ENCODE measurements at regions of chr19 and their contacts with region 1.

Region 1: GRCh38 chr19:42129399-42130253 is 2.6 kb downstream of the POU2F2 start:
- DNase-seq: no peak
- H3K4me3 ChIP-seq: peak overlapping the region in 1 of 3 donors; percentile 9
- H3K27ac ChIP-seq: no peak overlapping the region
- H3K4me1 ChIP-seq: no peaks in the 10 kb centered on the region
- H3K27me3 ChIP-seq: peaks cover 0 to 12% of the 10 kb centered on the region in 2 donors
- CTCF ChIP-seq: no peak
- POLR2A ChIP-seq: no peak

Region 2: GRCh38 chr19:42143341-42144234 is 14.0 kb after region 1 on chr19:
- intact Hi-C with region 1: no loop called
- DNase-seq: no peak
- H3K4me3 ChIP-seq: no peak overlapping the region
- H3K27ac ChIP-seq: no peak overlapping the region
- H3K4me1 ChIP-seq: no peaks in the 10 kb centered on the region
- H3K27me3 ChIP-seq: no peaks in the 10 kb centered on the region
- CTCF ChIP-seq: no peak
- POLR2A ChIP-seq: no peak

Region 3: DNA sequence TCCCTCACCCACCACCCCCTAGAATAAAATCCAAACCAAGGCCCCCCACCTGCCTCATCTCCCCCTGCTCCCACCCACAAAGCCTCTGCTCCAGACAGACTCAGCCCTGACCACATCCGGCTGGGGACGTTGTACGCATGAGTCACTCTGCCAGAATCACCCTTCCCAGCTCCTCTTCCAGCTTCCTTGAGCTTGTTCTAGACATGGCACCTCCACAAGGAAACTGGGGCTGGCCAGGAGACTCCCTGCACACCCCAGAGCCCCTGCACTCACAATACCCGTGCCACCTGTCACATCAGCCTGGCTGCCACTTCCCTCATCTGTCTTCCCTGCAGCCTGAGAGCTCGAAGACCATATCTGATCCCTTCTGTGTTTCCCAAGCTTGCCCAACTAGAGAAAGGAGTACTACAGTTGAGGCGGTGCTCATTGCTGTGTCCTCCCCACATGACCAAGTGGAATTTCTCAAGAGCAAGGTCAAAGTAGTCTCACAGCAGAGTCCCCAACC is 78.2 kb after region 1 on chr19:
- intact Hi-C with region 1: loop called (anchors 2 kb)
- DNase-seq: peak in 1 of 2 donors; percentile 46
- H3K4me3 ChIP-seq: no peak overlapping the region
- H3K27ac ChIP-seq: peak overlapping the region; percentile 44 to 59
- H3K4me1 ChIP-seq: no peaks in the 10 kb centered on the region
- H3K27me3 ChIP-seq: no peaks in the 10 kb centered on the region
- CTCF ChIP-seq: no peak
- POLR2A ChIP-seq: no peak

Region 4: DNA sequence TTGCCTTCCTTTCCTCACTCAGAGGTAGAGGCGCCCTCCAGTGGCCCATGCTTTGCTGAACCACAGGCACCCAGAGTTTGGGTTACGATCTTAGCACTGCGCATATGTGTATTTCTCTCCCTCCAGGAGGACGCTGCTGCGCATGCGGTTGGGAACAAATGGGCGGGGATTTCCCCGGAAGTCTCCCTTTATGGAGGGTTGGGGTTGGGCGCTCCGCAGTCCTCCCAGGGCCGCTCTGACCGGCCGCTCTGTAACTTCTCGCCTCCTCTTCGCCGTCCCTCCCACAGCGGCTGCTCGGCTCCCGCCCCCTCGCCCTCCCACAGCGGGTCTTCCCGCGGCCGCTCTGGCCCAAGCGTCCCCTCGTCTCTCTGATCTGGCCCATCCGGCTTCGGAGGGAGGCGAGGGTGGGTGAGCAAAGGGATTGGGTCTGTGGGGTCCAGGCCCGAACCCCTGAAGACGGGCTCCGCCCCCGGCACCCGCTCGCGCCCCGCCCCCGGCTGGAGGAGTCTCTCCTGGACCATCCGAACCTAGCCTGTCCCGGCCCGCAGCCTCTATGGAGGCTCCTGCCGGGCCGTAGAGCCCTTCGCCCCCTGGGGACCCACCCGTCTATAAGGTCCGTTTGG is 195.8 kb after region 1 on chr19 and contains the start of gene MEGF8:
- intact Hi-C with region 1: loop called (anchors 5 kb)
- DNase-seq: peak; percentile 96 to 98
- H3K4me3 ChIP-seq: peak within 1 kb of the TSS; percentile 75 to 87 (median 80)
- H3K27ac ChIP-seq: peak within 1 kb of the TSS; percentile 61 to 77
- H3K4me1 ChIP-seq: peaks cover 3 to 8% of the 10 kb centered on the region in 2 donors
- H3K27me3 ChIP-seq: peaks cover 5 to 15% of the 10 kb centered on the region in 2 donors
- CTCF ChIP-seq: peak in 1 of 3 donors; percentile 89
- POLR2A ChIP-seq: no peak
- total RNA-seq, gene MEGF8: 9.7 to 15.5 (median 10.8) TPM

Region 5: DNA sequence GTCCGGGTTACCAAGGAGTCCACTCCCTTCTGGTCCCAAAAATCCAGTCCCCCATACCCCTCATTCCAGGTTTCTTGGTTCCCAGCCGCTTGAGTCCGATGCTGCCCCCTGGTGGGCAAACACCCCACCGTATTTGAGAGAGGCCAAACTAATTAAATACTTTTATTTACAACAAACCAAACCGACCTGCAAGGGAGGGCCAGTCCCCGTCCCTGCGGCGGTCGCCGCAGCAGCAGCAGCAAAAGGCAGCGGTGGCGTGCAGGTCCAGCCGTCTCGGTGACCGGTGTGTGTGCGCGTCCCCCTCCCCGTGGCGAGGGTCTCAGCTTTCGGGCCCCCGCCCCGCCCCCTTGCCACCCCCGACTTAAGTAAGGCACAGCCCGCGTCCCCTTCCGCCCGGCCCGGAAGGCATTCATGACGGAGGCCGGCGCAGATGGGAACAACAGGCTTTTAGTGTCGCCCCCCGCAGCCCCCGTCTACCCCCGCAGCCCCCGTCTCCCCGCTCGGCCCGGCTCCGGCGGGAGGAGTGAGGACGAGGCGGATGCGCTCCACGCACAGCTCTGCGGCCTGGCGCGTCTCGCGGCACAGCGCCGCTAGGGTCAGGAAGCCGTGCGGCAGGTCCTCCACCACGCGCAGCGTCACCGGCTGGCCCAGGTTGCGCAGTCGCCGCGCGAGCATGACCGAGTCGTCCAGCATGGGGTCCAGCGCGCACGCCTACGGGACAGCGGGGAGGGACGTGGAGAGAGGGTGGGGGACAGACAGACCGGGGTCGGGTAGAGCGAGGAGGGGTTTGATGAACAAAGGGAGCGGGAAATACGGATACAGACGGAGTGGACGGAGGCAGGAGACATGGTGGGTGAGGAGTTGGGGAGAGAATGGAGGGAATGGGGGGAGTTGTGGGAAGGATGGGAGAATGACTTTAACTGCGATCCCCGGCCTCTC is 272.0 kb after region 1 on chr19:
- intact Hi-C with region 1: no loop called
- DNase-seq: peak; percentile 85 to 87
- H3K4me3 ChIP-seq: peak overlapping the region; percentile 55 to 78 (median 70)
- H3K27ac ChIP-seq: peak overlapping the region; percentile 82 to 84
- H3K4me1 ChIP-seq: peaks cover 4 to 5% of the 10 kb centered on the region in 2 donors
- H3K27me3 ChIP-seq: no peaks in the 10 kb centered on the region
- CTCF ChIP-seq: peak; percentile 76 to 78 (median 78)
- POLR2A ChIP-seq: no peak

Region 6: DNA sequence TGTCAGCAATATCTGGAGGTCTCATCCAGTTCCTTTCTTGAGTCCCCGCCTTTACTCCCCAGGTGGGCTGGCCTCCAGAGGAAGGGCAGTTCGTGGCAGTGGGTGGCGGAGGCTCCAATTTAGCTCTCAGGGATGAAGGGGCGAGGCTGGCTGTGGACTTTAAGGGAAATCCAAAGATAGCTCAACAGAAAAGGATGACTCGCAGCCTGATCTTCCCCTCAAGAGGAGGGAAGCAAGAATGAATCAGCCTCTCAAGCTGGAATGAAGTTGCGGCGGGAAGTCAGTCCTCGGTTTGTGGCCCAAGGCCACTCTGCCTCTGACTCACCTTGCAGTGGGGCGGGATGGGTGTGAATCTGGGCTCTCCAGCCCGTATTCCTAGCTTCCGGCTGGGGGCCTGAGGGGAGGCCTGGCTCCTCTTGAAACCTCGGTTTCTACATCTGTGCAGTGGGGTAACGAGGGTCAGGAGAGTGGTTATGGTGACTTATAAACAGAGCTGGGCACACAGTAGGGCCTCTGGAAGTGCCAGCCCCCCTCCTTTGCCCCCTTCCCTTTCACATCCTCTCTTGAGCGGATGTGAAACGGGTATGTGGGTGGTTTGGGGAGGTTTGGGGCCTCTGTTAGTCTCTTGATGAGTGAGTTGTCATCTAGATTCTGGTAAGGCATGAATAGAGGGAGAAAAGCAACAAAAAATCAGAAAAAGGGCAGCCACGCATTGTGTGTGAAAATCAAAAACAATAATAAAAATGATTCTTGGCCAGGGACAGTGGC is 1635.7 kb after region 1 on chr19:
- intact Hi-C with region 1: no loop called
- DNase-seq: peak in 1 of 2 donors; percentile 76
- H3K4me3 ChIP-seq: no peak overlapping the region
- H3K27ac ChIP-seq: peak overlapping the region; percentile 84 to 88
- H3K4me1 ChIP-seq: peaks cover 0 to 9% of the 10 kb centered on the region in 2 donors
- H3K27me3 ChIP-seq: no peaks in the 10 kb centered on the region
- CTCF ChIP-seq: no peak
- POLR2A ChIP-seq: no peak

Measured in breast epithelium (tissue), 4 donors.